ENCODE measurements at regions of chr3 and their contacts with region 1.

Region 1: DNA sequence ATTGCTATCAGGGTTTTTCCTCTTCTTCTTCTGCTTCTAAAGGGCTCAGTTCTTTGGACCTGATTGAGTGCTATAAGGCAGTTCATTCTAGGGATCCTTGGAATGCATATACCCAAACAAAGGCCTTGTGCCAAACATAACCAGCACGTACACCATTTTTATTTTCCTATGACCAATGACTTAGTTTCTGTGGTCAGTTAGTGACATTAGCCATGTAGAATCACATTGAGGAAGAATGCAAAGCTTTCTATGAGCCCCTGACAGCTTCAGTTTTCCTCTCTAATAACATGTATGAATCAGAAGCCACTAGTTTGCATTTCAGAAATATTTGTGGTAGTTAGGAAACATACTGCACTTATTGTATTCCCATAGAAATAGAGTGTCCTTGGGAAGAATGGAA is 240.0 kb downstream of the THRB start:
- DNase-seq: no peak
- CTCF ChIP-seq: no peak

Region 2: GRCh38 chr3:24264748-24265158 is 10.1 kb after region 1 on chr3:
- CTCF ChIA-PET with region 1: interaction called, 11 read pairs
- POLR2A ChIA-PET with region 1: no interaction called
- DNase-seq: peak; percentile 46
- CTCF ChIP-seq: peak; percentile 48

Region 3: DNA sequence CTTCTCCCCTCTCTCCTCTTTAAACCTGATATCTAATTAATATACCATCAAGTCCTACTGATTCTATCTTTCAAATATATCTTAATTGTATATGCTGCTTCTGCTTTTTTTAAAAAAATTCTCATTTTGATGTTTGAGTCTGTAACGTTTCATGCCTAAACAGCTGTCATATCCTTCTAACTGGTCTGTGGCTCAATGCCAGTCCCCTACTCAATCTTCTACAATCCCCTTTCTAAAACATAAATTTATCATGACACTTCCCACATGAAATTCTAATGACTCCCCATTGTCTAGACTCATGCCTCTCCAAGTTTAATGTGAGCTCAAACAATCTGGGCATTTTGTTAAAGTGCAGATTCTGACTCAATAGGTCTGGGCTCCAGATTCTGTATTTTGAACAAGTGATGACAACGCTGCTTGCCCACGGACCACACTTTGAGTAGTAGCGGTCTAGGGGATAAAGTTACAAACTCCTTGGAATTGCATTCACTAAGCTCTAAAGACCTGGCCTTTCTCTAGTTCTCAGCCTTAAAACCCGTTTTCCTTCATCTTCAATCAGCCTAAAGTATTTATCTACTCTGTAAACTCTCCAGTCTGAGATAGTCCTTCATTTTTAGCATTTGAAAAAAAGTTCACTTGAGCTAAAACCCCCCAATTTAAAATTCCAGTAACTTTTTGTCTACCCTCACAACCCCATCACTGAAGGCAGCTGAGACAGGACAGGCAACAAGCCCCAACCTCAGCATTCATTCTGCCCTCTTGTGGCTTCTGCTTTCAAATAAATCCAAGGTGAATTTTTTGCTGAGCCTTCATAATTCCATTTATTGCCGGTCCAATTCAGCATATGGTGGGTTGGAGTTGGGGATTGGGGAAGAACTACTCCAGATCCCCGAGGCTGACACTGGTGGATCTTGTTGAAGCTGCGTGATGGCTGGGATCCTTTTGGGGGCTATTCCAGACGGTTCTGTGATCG is 328.1 kb after region 1 on chr3:
- CTCF ChIA-PET with region 1: no interaction called
- POLR2A ChIA-PET with region 1: no interaction called
- DNase-seq: no peak
- CTCF ChIP-seq: no peak

Region 4: GRCh38 chr3:24662449-24663345 is 408.0 kb after region 1 on chr3:
- CTCF ChIA-PET with region 1: no interaction called
- POLR2A ChIA-PET with region 1: no interaction called
- DNase-seq: no peak
- CTCF ChIP-seq: no peak

Measured in GM10248 (cell line).